B cell (primary cell): ENCODE measurements at regions of chr6 and their contacts with region 1.

Region 1: GRCh38 chr6:33061987-33062386 is 11.5 kb downstream of the HLA-DPA1 start:
- DNase-seq: peak; percentile 85
- ATAC-seq: peak; percentile 70
- H3K4me3 ChIP-seq: peak overlapping the region in 1 of 5 experiments; percentile 6
- H3K4me3 Mint-ChIP-seq: peak overlapping the region; percentile 1
- H3K27ac ChIP-seq: peak overlapping the region in 1 of 2 donors; percentile 70
- H3K27ac Mint-ChIP-seq: peak overlapping the region; percentile 93
- H3K4me1 ChIP-seq: peaks cover 32 to 34% of the 10 kb centered on the region in 2 donors
- H3K4me1 Mint-ChIP-seq: peaks cover 44% of the 10 kb centered on the region
- H3K27me3 ChIP-seq: no peaks in the 10 kb centered on the region
- H3K27me3 Mint-ChIP-seq: no peaks in the 10 kb centered on the region
- CTCF ChIP-seq: no peak

Region 2: GRCh38 chr6:33029328-33030184 is 32.4 kb before region 1 on chr6:
- CTCF ChIA-PET with region 1: interaction called, 8 read pairs
- POLR2A ChIA-PET with region 1: interaction called, 31 read pairs
- intact Hi-C with region 1: loop called (anchors 1 kb)
- DNase-seq: peak; percentile 96
- ATAC-seq: peak; percentile 75
- H3K4me3 ChIP-seq: peak overlapping the region in 4 of 5 experiments; percentile 25 to 51 (median 33)
- H3K4me3 Mint-ChIP-seq: peak overlapping the region; percentile 71
- H3K27ac ChIP-seq: peak overlapping the region; percentile 99
- H3K27ac Mint-ChIP-seq: peak overlapping the region; percentile 99
- H3K4me1 ChIP-seq: peaks cover 45 to 54% of the 10 kb centered on the region in 2 donors
- H3K4me1 Mint-ChIP-seq: peaks cover 63% of the 10 kb centered on the region
- H3K27me3 ChIP-seq: no peaks in the 10 kb centered on the region
- H3K27me3 Mint-ChIP-seq: no peaks in the 10 kb centered on the region
- CTCF ChIP-seq: no peak

Region 3: DNA sequence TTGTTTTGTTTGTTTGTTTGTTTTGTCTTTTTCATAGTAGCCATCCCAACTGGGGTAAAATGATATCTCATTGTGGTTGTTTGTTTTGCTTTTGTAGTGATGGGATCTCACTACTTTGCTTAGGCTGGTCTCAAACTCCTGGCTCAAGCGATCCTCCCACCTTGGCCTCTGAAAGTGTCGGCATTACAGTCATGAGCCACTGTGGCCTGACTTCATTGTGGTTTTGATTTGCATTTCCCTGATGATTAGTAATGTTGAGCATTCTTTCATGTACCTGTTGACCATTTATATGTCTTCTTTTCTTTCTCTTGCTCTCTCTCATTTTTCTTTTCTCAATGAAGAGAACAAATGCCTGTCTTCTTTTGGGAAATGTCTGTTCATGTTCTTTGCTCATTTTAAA is 21.8 kb before region 1 on chr6:
- CTCF ChIA-PET with region 1: interaction called, 4 read pairs
- POLR2A ChIA-PET with region 1: interaction called, 3 read pairs
- intact Hi-C with region 1: loop called (anchors 2 kb)
- DNase-seq: no peak
- ATAC-seq: no peak
- H3K4me3 ChIP-seq: no peak overlapping the region
- H3K4me3 Mint-ChIP-seq: no peak overlapping the region
- H3K27ac ChIP-seq: no peak overlapping the region
- H3K27ac Mint-ChIP-seq: no peak overlapping the region
- H3K4me1 ChIP-seq: peaks cover 0 to 3% of the 10 kb centered on the region in 2 donors
- H3K4me1 Mint-ChIP-seq: peaks cover 8% of the 10 kb centered on the region
- H3K27me3 ChIP-seq: no peaks in the 10 kb centered on the region
- H3K27me3 Mint-ChIP-seq: no peaks in the 10 kb centered on the region
- CTCF ChIP-seq: no peak

Region 4: DNA sequence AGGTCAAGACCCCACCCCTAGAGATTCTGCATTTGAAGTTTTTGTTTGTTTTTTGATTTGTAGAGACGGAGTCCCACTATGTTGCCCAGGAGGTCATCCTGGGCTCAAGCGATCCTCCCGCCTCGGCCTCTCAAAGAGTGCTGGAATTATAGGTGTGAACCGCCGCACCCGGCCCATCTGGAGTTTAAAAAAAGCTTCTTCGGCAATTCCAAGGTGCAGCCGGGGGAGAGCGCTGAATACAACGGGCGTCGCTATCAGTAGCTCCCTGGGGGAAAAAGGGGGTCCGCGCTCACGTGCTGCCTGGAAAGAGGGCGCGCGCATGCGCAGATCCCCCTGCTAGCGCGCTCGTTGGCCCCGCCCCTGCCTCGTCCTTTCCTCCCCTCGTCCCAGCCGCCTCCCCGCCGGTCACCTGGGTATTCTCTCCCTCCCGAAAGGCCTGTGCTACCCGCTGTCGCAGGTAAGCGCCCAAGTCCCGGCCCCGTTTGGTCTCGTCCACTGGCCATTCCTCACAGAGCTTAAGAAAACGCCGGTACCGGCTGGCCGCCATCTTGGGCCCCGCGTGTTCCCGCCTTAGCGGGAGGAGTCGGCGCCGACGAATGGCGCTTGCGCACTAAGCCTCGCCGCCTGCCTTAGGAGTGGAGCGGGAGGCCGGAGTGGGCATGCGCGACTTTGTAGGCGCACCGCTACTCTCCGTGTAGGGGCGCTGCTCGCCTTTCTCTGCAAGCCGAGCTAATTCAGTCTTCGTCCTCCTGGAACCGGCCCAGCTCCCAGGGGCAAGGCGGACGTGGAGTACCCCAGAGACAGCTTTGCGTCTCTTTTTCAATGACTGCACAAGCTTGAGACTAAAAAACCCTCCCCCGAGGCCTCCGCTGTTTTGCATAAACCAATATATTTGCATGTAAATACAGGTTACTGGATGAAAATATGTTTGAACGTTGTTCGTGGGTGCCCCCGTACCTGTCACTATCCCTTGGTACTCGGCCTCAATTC is 649.4 kb after region 1 on chr6 and contains the start of gene UQCC2:
- CTCF ChIA-PET with region 1: no interaction called
- POLR2A ChIA-PET with region 1: no interaction called
- intact Hi-C with region 1: no loop called
- DNase-seq: peak; percentile 99
- ATAC-seq: peak; percentile 87
- H3K4me3 ChIP-seq: peak within 1 kb of the TSS; percentile 62 to 96 (median 93)
- H3K4me3 Mint-ChIP-seq: peak within 1 kb of the TSS; percentile 87
- H3K27ac ChIP-seq: peak within 1 kb of the TSS; percentile 83 to 88
- H3K27ac Mint-ChIP-seq: peak within 1 kb of the TSS; percentile 93
- H3K4me1 ChIP-seq: peaks cover 16 to 28% of the 10 kb centered on the region in 2 donors
- H3K4me1 Mint-ChIP-seq: peaks cover 33% of the 10 kb centered on the region
- H3K27me3 ChIP-seq: no peaks in the 10 kb centered on the region
- H3K27me3 Mint-ChIP-seq: no peaks in the 10 kb centered on the region
- CTCF ChIP-seq: peak; percentile 44
- total RNA-seq, gene UQCC2: 16.6 and 17.1 TPM in 2 replicates